Ovary (tissue), 10 donors: ENCODE measurements at regions of chr16 and their contacts with region 1.

Region 1: DNA sequence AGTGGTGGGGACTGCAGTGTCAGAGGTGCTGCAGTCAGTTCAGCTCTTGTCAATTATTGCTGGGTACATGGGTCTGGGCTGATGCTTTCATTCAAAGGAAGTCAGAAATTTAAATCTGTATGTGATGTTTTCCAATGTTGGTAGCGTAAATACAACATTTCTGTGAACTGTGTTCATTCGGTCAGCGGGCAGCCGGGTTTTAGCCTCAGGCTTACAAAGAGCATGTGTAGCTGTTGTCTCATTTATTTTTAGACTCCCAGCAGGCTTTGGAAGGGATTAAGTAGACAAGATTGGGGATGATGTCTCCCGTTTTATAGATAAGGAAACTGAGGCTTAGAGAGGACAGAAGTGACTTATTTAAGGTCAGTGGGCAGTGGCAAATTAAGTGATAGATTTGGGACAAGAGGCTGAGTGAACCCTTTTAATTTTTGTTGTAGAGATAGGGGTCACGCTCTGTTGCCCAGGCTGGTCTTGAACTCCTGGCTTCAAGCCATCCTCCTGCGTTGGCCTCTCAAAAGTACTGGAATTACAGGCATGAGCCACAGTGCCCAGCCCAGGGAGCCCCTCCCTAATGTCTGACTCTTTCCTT is 8.1 kb downstream of the AQP8 start:
- DNase-seq: no peak
- H3K4me3 ChIP-seq: no peak overlapping the region
- H3K27ac ChIP-seq: no peak overlapping the region
- H3K4me1 ChIP-seq: no peaks in the 10 kb centered on the region
- H3K27me3 ChIP-seq: no peaks in the 10 kb centered on the region
- CTCF ChIP-seq: no peak
- EP300 ChIP-seq: no peak
- POLR2A ChIP-seq: no peak

Region 2: DNA sequence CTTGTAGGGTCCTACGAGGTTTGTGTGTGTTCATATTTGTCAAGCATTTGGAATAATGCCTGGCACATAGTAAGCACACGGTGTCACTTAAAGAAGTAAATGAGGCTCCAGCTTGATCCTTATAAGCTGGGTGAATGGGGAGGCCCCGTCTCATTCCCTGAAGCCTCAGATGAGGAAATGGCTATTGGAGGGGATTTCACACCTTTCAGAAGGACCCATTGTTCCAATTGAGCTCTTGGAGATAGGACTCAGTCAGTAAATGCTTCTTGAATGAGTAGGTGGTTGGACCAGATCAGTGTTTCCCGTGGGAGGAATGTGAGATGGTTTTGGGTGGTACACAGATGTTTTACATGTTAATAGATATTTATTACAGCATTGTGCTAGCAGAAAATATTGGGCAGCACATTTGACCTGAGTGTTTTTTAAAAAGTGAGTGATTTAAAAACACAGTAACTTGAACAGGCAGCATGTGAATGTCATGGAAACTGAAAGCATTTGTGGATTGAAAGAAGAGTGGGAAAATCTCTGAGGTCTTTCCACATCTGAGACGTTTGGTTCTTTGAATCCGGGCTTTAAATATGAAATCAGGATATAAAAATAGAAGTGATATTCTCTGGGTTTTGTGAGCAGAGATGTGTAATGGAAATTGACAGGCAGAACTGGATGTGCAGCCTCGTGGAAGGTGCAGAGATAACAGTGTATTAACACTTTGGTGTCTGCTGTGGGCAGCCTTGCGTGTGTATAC is 173.2 kb before region 1 on chr16:
- intact Hi-C with region 1: loop called in 2 of 4 experiments (anchors 10 kb)
- DNase-seq: no peak
- H3K4me3 ChIP-seq: no peak overlapping the region
- H3K27ac ChIP-seq: no peak overlapping the region
- H3K4me1 ChIP-seq: peaks cover 3% of the 10 kb centered on the region
- H3K27me3 ChIP-seq: no peaks in the 10 kb centered on the region
- CTCF ChIP-seq: no peak
- EP300 ChIP-seq: no peak
- POLR2A ChIP-seq: no peak

Region 3: GRCh38 chr16:25060920-25061319 is 163.9 kb before region 1 on chr16:
- intact Hi-C with region 1: loop called in 3 of 4 experiments (anchors 5 to 10 kb)
- DNase-seq: no peak
- H3K4me3 ChIP-seq: no peak overlapping the region
- H3K27ac ChIP-seq: no peak overlapping the region
- H3K4me1 ChIP-seq: no peaks in the 10 kb centered on the region
- H3K27me3 ChIP-seq: no peaks in the 10 kb centered on the region
- CTCF ChIP-seq: no peak
- EP300 ChIP-seq: no peak
- POLR2A ChIP-seq: no peak

Region 4: GRCh38 chr16:25126820-25127232 is 98.0 kb before region 1 on chr16:
- intact Hi-C with region 1: loop called in 2 of 4 experiments (anchors 5 kb)
- DNase-seq: no peak
- H3K4me3 ChIP-seq: no peak overlapping the region
- H3K27ac ChIP-seq: no peak overlapping the region
- H3K4me1 ChIP-seq: no peaks in the 10 kb centered on the region
- H3K27me3 ChIP-seq: no peaks in the 10 kb centered on the region
- CTCF ChIP-seq: no peak
- EP300 ChIP-seq: no peak
- POLR2A ChIP-seq: no peak